Psoas muscle (tissue), 8 donors: ENCODE measurements at regions of chr10 and their contacts with region 1.

Region 1: DNA sequence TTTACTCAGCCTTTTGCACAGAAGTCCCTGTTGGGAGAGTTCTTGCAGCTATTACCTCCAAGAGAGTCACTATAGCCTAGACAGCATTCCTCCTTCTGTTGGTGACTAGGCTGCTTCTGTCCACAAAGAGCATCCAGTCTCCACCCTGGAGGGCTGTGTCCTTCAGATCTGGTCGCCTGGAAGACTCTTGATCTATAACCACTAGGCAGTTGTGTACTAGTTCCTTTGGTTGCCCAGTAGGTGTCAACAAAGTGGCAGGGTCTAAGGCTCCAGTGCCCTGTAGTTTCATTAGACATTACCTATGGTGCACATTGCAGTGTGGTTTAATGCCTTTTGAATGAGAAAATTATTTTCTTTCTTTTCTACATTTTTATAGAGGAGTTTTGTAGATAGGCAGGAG is 11.3 kb upstream of the AKR1C2 start:
- DNase-seq: no peak
- ATAC-seq: peak in 3 of 4 donors; percentile 52 to 57 (median 52)
- H3K4me3 ChIP-seq: peak overlapping the region; percentile 50
- H3K27ac ChIP-seq: no peak overlapping the region
- H3K4me1 ChIP-seq: peaks cover 32% of the 10 kb centered on the region
- H3K27me3 ChIP-seq: no peaks in the 10 kb centered on the region
- CTCF ChIP-seq: peak; percentile 35

Region 2: GRCh38 chr10:4784667-4785333 is 230.1 kb before region 1 on chr10:
- intact Hi-C with region 1: no loop called
- DNase-seq: no peak
- ATAC-seq: no peak
- H3K4me3 ChIP-seq: no peak overlapping the region
- H3K27ac ChIP-seq: no peak overlapping the region
- H3K4me1 ChIP-seq: peaks cover 8% of the 10 kb centered on the region
- H3K27me3 ChIP-seq: no peaks in the 10 kb centered on the region
- CTCF ChIP-seq: no peak

Region 3: GRCh38 chr10:5043716-5044115 is 28.8 kb after region 1 on chr10:
- intact Hi-C with region 1: no loop called
- DNase-seq: no peak
- ATAC-seq: peak in 1 of 4 donors; percentile 54
- H3K4me3 ChIP-seq: no peak overlapping the region
- H3K27ac ChIP-seq: no peak overlapping the region
- H3K4me1 ChIP-seq: no peaks in the 10 kb centered on the region
- H3K27me3 ChIP-seq: no peaks in the 10 kb centered on the region
- CTCF ChIP-seq: no peak

Region 4: DNA sequence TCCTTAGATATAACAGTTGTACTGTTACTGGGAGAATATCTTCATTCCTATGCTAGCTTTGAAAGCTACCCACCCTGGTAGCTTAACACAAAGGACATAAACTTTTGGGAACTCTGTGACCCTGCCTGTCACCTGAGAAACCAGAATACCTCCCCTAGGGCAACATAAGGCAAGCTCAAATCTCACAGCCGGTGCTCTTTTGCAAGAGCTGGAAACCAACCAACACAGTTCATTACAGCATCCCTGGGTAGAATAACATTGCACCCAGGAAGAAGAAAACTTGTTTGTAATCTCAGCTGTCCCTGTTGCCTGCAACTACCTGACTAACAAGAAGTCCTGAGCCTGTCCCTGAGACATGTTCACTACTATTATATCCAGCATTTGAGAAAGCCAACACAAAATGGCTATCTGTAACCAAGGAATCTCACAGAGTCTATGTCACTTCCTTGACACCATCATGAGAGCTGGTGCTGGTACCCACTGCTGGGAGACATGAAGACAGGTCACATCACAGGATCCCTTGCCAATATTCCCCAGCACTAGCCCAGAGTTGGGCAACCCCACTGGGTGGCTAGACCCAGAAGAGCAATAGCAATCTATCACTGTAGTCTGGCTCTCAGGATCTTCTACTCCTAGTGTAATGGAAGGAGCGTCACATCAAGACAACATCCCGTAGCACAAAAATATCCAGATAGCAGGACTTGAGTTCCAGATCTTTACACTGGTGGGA is 110.5 kb after region 1 on chr10:
- intact Hi-C with region 1: no loop called
- DNase-seq: no peak
- ATAC-seq: peak in 3 of 4 donors; percentile 30 to 43 (median 35)
- H3K4me3 ChIP-seq: no peak overlapping the region
- H3K27ac ChIP-seq: no peak overlapping the region
- H3K4me1 ChIP-seq: no peaks in the 10 kb centered on the region
- H3K27me3 ChIP-seq: no peaks in the 10 kb centered on the region
- CTCF ChIP-seq: no peak

Region 5: GRCh38 chr10:5283305-5284158 is 268.6 kb after region 1 on chr10:
- intact Hi-C with region 1: loop called in 1 of 2 experiments (anchors 5 kb)
- DNase-seq: peak; percentile 63 to 64
- ATAC-seq: peak; percentile 82 to 92 (median 88)
- H3K4me3 ChIP-seq: no peak overlapping the region
- H3K27ac ChIP-seq: no peak overlapping the region
- H3K4me1 ChIP-seq: peaks cover 4% of the 10 kb centered on the region
- H3K27me3 ChIP-seq: peaks cover 0 to 1% (median 0%) of the 10 kb centered on the region in 3 donors
- CTCF ChIP-seq: peak; percentile 68